ENCODE measurements at regions of chr19 and their contacts with region 1.

Region 1: GRCh38 chr19:43446746-43447489 is 18.5 kb downstream of the LYPD3 start:
- DNase-seq: peak; percentile 84
- ATAC-seq: peak; percentile 92
- H3K4me3 Mint-ChIP-seq: peak overlapping the region; percentile 34; the same call in 1 of the 2 replicates
- H3K27ac Mint-ChIP-seq: 0 out of 2 replicates have a peak overlapping the region, but pooled peaks have one; percentile 5
- H3K4me1 Mint-ChIP-seq: peaks cover 10% of the 10 kb centered on the region
- H3K27me3 Mint-ChIP-seq: peaks cover 7% of the 10 kb centered on the region; the same call in 1 of the 2 replicates
- CTCF ChIP-seq: peak; percentile 91

Region 2: GRCh38 chr19:43362179-43362578 is 84.7 kb before region 1 on chr19:
- CTCF ChIA-PET with region 1: no interaction called
- POLR2A ChIA-PET with region 1: no interaction called
- DNase-seq: no peak
- ATAC-seq: no peak
- H3K4me3 Mint-ChIP-seq: no peak overlapping the region
- H3K27ac Mint-ChIP-seq: no peak overlapping the region
- H3K4me1 Mint-ChIP-seq: peaks cover 28% of the 10 kb centered on the region
- H3K27me3 Mint-ChIP-seq: no peaks in the 10 kb centered on the region; the same call in 1 of the 2 replicates
- CTCF ChIP-seq: no peak

Region 3: GRCh38 chr19:43425567-43426392 is 21.1 kb before region 1 on chr19:
- CTCF ChIA-PET with region 1: interaction called, 39 read pairs
- POLR2A ChIA-PET with region 1: no interaction called
- DNase-seq: no peak
- ATAC-seq: peak; percentile 67
- H3K4me3 Mint-ChIP-seq: no peak overlapping the region
- H3K27ac Mint-ChIP-seq: no peak overlapping the region
- H3K4me1 Mint-ChIP-seq: peaks cover 32% of the 10 kb centered on the region
- H3K27me3 Mint-ChIP-seq: no peaks in the 10 kb centered on the region
- CTCF ChIP-seq: no peak

Region 4: DNA sequence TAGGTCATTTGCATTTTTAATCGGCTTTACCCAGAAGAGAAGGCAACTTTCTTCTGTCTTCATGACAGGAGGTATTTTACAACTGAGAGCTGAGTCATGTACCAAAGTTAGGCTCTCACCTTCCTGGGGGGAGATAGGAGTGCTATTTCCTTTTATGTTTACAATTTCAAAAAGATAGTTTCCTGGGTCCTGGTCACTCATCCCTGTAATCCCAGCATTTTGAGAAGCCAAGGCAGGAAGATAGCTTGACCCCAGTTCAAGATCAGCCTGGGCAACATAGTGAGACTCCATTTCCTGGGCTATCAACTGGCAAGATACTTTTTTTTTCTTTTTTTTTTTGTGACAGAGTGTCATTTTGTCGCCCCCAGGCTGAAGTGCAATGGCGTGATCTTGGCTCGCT is 10.9 kb after region 1 on chr19:
- CTCF ChIA-PET with region 1: interaction called, 66 read pairs
- POLR2A ChIA-PET with region 1: no interaction called
- DNase-seq: no peak
- ATAC-seq: no peak
- H3K4me3 Mint-ChIP-seq: no peak overlapping the region
- H3K27ac Mint-ChIP-seq: no peak overlapping the region
- H3K4me1 Mint-ChIP-seq: peaks cover 19% of the 10 kb centered on the region
- H3K27me3 Mint-ChIP-seq: peaks cover 33% of the 10 kb centered on the region
- CTCF ChIP-seq: no peak

Region 5: DNA sequence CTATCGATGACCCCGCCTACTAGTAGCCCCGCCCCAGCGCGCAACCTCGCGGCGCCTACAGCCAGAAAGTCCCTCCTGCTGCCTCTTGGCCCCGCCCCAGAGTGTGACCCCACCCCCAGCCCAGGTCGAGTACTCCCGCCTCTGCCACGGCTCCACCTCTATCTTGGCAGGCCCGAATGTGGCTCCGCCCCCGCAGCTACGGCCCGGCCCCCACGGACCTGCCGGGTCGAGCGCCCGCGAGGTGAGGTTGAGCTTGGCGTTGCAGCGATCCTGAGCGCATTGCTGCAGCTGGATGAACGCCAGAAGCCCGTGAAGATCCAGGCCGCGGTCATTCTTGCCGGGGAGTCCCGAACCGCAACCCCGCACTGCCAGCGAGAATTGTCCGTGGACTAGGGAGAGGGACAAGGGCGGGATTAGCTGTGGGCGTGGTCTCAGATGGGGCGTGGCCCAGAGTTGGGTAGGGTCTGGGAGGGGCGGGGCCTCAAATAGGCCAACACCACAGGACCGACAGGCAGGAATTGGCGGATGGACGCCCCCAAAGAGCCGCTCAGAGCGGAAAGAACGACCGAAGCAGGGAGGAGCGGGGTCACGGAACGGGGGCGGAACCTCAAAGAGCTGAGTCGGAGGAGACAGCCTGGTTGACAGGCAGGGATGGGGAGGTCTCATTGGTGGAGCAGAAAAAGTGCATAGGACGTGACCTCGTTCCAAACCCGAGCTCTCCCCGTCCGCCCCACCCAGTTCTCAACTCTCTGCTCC is 16.6 kb after region 1 on chr19:
- CTCF ChIA-PET with region 1: interaction called, 66 read pairs
- POLR2A ChIA-PET with region 1: no interaction called
- DNase-seq: peak; percentile 99
- ATAC-seq: peak; percentile 89
- H3K4me3 Mint-ChIP-seq: peak overlapping the region; percentile 91
- H3K27ac Mint-ChIP-seq: peak overlapping the region; percentile 99
- H3K4me1 Mint-ChIP-seq: peaks cover 14% of the 10 kb centered on the region
- H3K27me3 Mint-ChIP-seq: peaks cover 71% of the 10 kb centered on the region
- CTCF ChIP-seq: no peak

Region 6: GRCh38 chr19:43503501-43504425 is 56.8 kb after region 1 on chr19:
- CTCF ChIA-PET with region 1: interaction called, 50 read pairs
- POLR2A ChIA-PET with region 1: interaction called, 3 read pairs
- DNase-seq: peak; percentile 97
- ATAC-seq: peak; percentile 89
- H3K4me3 Mint-ChIP-seq: peak overlapping the region; percentile 91
- H3K27ac Mint-ChIP-seq: peak overlapping the region; percentile 74
- H3K4me1 Mint-ChIP-seq: peaks cover 21% of the 10 kb centered on the region
- H3K27me3 Mint-ChIP-seq: peaks cover 38% of the 10 kb centered on the region
- CTCF ChIP-seq: peak; percentile 25; the same call in 1 of the 2 replicates

Region 7: GRCh38 chr19:43511324-43511723 is 64.4 kb after region 1 on chr19:
- CTCF ChIA-PET with region 1: interaction called, 50 read pairs
- POLR2A ChIA-PET with region 1: no interaction called
- DNase-seq: no peak
- ATAC-seq: no peak
- H3K4me3 Mint-ChIP-seq: no peak overlapping the region
- H3K27ac Mint-ChIP-seq: no peak overlapping the region
- H3K4me1 Mint-ChIP-seq: no peaks in the 10 kb centered on the region
- H3K27me3 Mint-ChIP-seq: peaks cover 2% of the 10 kb centered on the region; the same call in 1 of the 2 replicates
- CTCF ChIP-seq: no peak

Region 8: GRCh38 chr19:43526884-43527859 is 80.3 kb after region 1 on chr19 and contains the start of gene ETHE1:
- CTCF ChIA-PET with region 1: interaction called, 245 read pairs
- POLR2A ChIA-PET with region 1: interaction called, 3 read pairs
- DNase-seq: peak; percentile 89
- ATAC-seq: peak; percentile 83
- H3K4me3 Mint-ChIP-seq: peak within 1 kb of the TSS; percentile 84
- H3K27ac Mint-ChIP-seq: no peak within 1 kb of the TSS
- H3K4me1 Mint-ChIP-seq: peaks cover 15% of the 10 kb centered on the region
- H3K27me3 Mint-ChIP-seq: peaks cover 46% of the 10 kb centered on the region
- CTCF ChIP-seq: no peak
- total RNA-seq, gene ETHE1: 19.0 to 23.5 TPM (median 21.2 TPM) in 3 replicates

Region 9: GRCh38 chr19:43605875-43606568 is 159.1 kb after region 1 on chr19:
- CTCF ChIA-PET with region 1: no interaction called
- POLR2A ChIA-PET with region 1: no interaction called
- DNase-seq: no peak
- ATAC-seq: no peak
- H3K4me3 Mint-ChIP-seq: no peak overlapping the region
- H3K27ac Mint-ChIP-seq: no peak overlapping the region
- H3K4me1 Mint-ChIP-seq: peaks cover 6% of the 10 kb centered on the region; the same call in 1 of the 2 replicates
- H3K27me3 Mint-ChIP-seq: no peaks in the 10 kb centered on the region
- CTCF ChIP-seq: no peak

Measured in WTC11 (cell line).